ENCODE measurements at regions of chr22 and their contacts with region 1.

Region 1: DNA sequence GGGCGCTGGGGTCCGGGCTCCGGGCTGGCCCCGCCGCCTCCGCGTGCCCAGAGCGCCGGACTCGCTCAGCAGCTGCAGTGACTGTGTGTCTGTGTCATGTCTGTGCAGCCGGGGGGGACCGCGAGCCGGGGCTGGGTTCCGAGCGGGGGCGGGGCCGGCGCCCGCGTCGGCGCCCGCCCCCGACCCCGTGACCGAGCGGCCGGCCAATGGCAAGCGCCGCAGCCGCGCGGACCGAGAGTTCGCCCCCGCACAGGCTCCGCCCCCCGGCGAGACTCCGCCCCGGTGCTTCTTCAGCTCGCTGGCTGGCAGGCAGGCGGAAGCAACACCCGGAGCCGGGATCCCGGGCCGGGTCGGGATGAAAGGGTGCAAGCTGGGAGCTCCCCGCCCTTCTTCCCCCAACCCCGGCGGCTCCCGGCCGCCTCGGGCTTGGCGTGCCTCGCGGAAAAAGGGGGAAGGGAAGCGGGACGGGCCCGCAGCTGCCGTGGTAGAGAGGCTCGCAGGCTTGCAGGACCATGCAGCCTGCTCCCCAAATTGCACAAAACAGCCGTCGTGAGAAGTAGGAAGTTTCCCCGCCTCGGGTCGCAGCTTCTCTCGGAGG is 750 bp upstream of the LARGE1 start:
- DNase-seq: peak; percentile 98
- ATAC-seq: peak; percentile 95

Region 2: GRCh38 chr22:33519071-33519973 is 401.7 kb before region 1 on chr22:
- intact Hi-C with region 1: loop called (anchors 2 kb)
- DNase-seq: no peak
- ATAC-seq: peak; percentile 65

Region 3: DNA sequence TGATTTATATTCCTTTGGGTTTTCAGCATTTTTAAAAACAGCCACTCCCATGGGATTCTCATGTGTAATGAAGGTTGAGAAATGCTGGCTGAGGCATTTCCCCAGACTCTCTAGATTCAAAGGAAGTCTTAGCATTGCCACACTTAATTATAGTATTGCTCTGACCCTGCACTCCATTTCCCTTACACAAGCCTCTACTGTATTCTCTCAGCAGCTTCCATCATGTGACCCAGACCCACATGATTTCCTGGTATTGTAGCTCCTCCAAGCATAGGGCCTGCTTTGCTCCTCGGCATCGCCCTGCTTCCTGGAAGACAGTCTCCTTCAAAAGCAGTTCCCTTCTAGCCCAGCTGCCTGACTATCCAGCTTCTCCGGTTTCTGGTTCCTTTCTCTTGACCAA is 262.3 kb before region 1 on chr22:
- intact Hi-C with region 1: loop called (anchors 2 kb)
- DNase-seq: peak; percentile 53
- ATAC-seq: peak; percentile 69

Region 4: DNA sequence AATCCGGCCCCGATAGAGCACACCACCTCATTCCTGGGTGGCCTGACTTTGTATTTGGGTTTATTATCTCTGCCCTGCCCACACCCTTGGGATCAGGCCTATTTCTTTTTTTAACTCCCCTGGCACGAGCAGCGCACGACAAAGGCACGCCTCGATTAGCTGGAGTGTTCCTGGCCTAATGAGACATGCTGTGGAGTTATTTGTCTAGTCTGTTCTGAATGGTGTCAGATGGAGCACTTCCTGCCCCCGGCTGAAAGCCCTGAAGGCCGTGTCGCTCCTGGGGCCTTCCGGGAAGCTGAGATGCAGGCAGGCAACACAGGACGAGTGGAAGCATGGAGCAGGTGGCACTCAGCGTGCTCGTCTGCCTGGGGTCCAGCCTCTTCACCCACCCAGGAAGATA is 47.8 kb before region 1 on chr22:
- intact Hi-C with region 1: loop called (anchors 2 kb)
- DNase-seq: no peak
- ATAC-seq: peak; percentile 84

Region 5: GRCh38 chr22:34236527-34236926 is 315.5 kb after region 1 on chr22:
- intact Hi-C with region 1: loop called (anchors 5 kb)
- DNase-seq: no peak
- ATAC-seq: peak; percentile 96

Measured in Right ventricle myocardium inferior (tissue), 1 donor.